Heart left ventricle (tissue), 16 donors: ENCODE measurements at regions of chr18 and their contacts with region 1.

Region 1: GRCh38 chr18:22282311-22283112 is 113.1 kb downstream of the GATA6 start:
- DNase-seq: no peak
- ATAC-seq: peak in 2 of 4 donors; percentile 21 to 33
- H3K4me3 ChIP-seq: no peak overlapping the region
- H3K27ac ChIP-seq: peak overlapping the region in 1 of 12 donors; percentile 66
- H3K4me1 ChIP-seq: peaks cover 0 to 50% (median 15%) of the 10 kb centered on the region in 12 donors
- H3K27me3 ChIP-seq: no peaks in the 10 kb centered on the region
- CTCF ChIP-seq: no peak
- POLR2A ChIP-seq: no peak

Region 2: GRCh38 chr18:22318745-22319407 is 36.4 kb after region 1 on chr18:
- intact Hi-C with region 1: loop called in 1 of 10 experiments (anchors 5 kb)
- DNase-seq: no peak
- ATAC-seq: peak in 2 of 4 donors; percentile 41 to 77
- H3K4me3 ChIP-seq: no peak overlapping the region
- H3K27ac ChIP-seq: no peak overlapping the region
- H3K4me1 ChIP-seq: peaks cover 0 to 26% (median under 1%) of the 10 kb centered on the region in 12 donors
- H3K27me3 ChIP-seq: no peaks in the 10 kb centered on the region
- CTCF ChIP-seq: no peak
- POLR2A ChIP-seq: no peak

Region 3: DNA sequence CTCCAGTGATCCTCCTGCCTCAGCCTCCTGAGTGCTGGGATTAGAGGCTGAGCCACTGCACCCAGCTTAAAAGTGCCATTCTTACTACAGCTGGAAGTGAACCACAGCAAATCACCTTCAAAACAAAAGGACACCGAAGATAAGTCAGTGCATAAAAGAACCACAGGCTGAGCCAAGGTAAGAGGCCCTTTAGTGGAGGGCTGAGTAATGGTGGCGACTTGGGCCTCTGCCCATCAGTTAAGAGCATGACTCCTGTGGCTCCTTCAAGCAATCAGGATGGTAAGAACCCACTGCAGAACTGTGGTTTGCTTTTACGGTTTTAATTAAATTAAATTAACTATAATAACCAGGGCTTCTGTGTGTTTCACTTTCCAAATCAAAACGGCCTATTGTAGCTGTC is 60.1 kb after region 1 on chr18:
- intact Hi-C with region 1: loop called in 6 of 10 experiments (anchors 2 to 10 kb)
- DNase-seq: peak in 1 of 5 donors; percentile 50
- ATAC-seq: no peak
- H3K4me3 ChIP-seq: no peak overlapping the region
- H3K27ac ChIP-seq: peak overlapping the region in 5 of 12 donors; percentile 13 to 88 (median 28)
- H3K4me1 ChIP-seq: peaks cover 0 to 54% (median 36%) of the 10 kb centered on the region in 12 donors
- H3K27me3 ChIP-seq: peaks cover 0 to 14% (median 0%) of the 10 kb centered on the region in 9 donors
- CTCF ChIP-seq: no peak
- POLR2A ChIP-seq: no peak

Region 4: DNA sequence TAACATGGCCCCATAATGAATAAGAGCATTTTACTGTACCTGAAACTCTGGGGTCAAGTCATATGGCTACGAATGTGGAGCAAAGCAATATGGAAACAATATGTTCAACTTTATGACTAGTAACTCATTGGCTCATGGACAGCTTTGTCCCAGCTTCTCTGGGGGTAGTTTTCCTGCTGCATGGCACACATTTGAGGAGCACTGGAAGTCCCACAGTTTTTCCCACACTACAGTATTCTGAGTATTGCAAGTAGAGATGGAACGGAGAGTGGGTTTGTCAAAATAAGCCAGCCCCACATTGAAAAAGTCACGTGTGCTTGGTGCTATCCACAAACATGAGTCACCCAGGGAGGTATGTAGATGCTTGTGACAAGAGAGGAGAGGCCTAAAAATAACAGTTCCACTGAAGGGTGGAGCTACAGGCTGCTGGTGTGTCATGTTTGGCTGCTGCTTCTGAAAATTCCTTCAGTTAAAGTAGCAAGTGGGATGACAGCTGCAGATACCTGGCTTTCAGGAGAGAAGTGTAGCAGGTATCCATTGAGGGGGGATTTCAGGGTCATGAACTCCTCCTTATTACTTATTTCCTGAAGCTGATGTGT is 183.4 kb after region 1 on chr18:
- intact Hi-C with region 1: loop called in 3 of 10 experiments (anchors 5 kb)
- DNase-seq: peak in 4 of 5 donors; percentile 51 to 71 (median 60)
- ATAC-seq: peak; percentile 92 to 94 (median 94)
- H3K4me3 ChIP-seq: peak overlapping the region in 1 of 12 donors; percentile 1
- H3K27ac ChIP-seq: peak overlapping the region; percentile 65 to 96 (median 86)
- H3K4me1 ChIP-seq: peaks cover 0 to 49% (median 34%) of the 10 kb centered on the region in 12 donors
- H3K27me3 ChIP-seq: no peaks in the 10 kb centered on the region
- CTCF ChIP-seq: no peak
- POLR2A ChIP-seq: peak in 1 of 2 donors; percentile 6